ENCODE measurements at regions of chr2 and their contacts with region 1.

Region 1: GRCh38 chr2:100381240-100381639 is 36.2 kb downstream of the CHST10 start:
- DNase-seq: peak; percentile 81
- H3K4me3 ChIP-seq: no peak overlapping the region
- H3K27ac ChIP-seq: no peak overlapping the region
- H3K4me1 ChIP-seq: no peaks in the 10 kb centered on the region
- H3K27me3 ChIP-seq: peaks cover 4 to 6% of the 10 kb centered on the region in 2 experiments
- CTCF ChIP-seq: peak; percentile 81 to 87
- POLR2A ChIP-seq: no peak

Region 2: GRCh38 chr2:100285691-100286090 is 95.5 kb before region 1 on chr2:
- CTCF ChIA-PET with region 1: interaction called, 20 read pairs
- POLR2A ChIA-PET with region 1: no interaction called
- dilution Hi-C with region 1: no loop called
- intact Hi-C with region 1: no loop called
- DNase-seq: peak; percentile 85
- H3K4me3 ChIP-seq: no peak overlapping the region
- H3K27ac ChIP-seq: peak overlapping the region; percentile 22
- H3K4me1 ChIP-seq: peaks cover 14% of the 10 kb centered on the region
- H3K27me3 ChIP-seq: peaks cover 3 to 16% of the 10 kb centered on the region in 2 experiments
- CTCF ChIP-seq: no peak
- POLR2A ChIP-seq: no peak

Region 3: GRCh38 chr2:100291120-100291970 is 89.9 kb before region 1 on chr2:
- CTCF ChIA-PET with region 1: interaction called, 20 read pairs
- POLR2A ChIA-PET with region 1: no interaction called
- dilution Hi-C with region 1: no loop called
- intact Hi-C with region 1: no loop called
- DNase-seq: peak; percentile 77
- H3K4me3 ChIP-seq: no peak overlapping the region
- H3K27ac ChIP-seq: no peak overlapping the region
- H3K4me1 ChIP-seq: peaks cover 6% of the 10 kb centered on the region
- H3K27me3 ChIP-seq: peaks cover 4 to 7% of the 10 kb centered on the region in 2 experiments
- CTCF ChIP-seq: no peak
- POLR2A ChIP-seq: no peak

Region 4: DNA sequence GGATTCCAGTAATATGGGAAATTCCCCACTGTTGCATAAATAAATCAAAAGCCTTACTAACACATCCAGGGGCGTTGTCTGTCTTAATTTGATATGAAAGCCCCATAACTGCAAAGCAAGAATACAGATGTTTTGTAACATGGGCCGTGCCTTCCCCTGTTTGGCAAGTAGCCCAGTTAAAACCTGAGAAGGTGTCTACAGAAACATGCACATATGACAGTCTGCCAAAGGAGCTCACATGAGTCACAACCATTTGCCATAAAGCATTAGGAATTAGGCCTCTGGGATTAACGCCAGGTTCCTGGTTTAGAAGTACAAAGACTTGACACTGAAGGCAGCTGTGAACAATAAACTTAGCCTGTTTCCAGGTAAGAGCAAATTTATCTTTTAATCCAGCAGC is 15.8 kb before region 1 on chr2:
- CTCF ChIA-PET with region 1: interaction called, 34 read pairs
- POLR2A ChIA-PET with region 1: no interaction called
- dilution Hi-C with region 1: no loop called
- intact Hi-C with region 1: no loop called
- DNase-seq: no peak
- H3K4me3 ChIP-seq: no peak overlapping the region
- H3K27ac ChIP-seq: no peak overlapping the region
- H3K4me1 ChIP-seq: no peaks in the 10 kb centered on the region
- H3K27me3 ChIP-seq: no peaks in the 10 kb centered on the region
- CTCF ChIP-seq: no peak
- POLR2A ChIP-seq: no peak

Region 5: DNA sequence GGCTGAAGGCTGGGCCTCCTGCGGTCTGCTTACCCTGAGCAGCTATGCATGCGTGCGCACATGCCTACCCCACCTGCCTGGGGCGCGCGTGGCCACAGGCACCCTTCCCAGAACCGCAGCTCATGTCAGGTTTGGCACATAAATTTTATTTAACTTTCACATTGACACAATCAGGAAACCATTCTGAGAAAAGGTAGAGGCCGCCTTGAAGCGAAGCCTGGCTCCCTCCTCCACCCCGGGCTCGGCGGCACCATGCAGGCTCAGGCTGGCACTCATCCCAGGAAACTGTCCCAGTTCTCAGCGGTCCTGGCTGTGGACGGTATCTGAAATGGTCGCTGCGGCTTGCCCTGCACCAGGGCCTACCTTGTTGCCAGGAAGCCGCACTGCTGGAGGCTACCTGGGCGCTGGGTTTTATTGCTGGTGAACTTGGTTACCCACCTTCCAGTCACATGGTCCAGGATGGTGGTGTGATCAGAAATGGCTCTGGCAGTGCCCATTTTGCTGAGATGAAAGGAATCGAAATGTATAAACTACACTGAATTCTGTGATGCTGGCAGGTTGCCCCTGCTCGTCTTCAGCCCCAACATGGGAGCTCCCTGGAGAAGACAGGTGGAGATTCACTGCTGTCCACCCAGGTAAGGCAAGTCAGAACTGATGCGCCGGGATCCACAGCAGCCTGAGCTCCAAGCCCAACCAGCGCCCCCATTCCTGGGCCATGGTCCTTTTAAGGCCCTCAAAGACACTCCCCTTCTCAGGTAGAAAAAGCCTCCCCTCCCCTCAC is 10.7 kb after region 1 on chr2:
- CTCF ChIA-PET with region 1: interaction called, 30 read pairs
- POLR2A ChIA-PET with region 1: no interaction called
- dilution Hi-C with region 1: no loop called
- intact Hi-C with region 1: no loop called
- DNase-seq: no peak
- H3K4me3 ChIP-seq: no peak overlapping the region
- H3K27ac ChIP-seq: no peak overlapping the region
- H3K4me1 ChIP-seq: no peaks in the 10 kb centered on the region
- H3K27me3 ChIP-seq: no peaks in the 10 kb centered on the region
- CTCF ChIP-seq: no peak
- POLR2A ChIP-seq: no peak

Measured in endothelial cell of umbilical vein (primary cell).